ENCODE measurements at regions of chr14 and their contacts with region 1.

Region 1: DNA sequence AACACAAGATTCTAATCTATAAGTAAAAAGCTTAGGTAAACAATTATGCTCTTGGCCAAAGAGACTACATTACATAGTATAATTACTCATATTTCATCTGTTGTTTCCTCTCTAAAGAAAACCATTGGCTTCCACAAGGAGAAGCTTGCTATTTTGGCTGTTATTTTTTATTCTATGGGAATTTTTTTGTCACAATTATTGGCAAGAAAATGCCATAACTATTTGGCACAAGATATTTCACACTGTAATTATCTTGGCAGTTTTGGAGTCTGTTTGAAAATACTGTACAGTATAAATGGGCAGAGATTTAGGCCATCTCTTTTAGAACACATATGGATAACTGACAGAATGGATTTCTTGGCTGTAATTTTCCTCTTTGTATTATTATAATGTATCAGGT is 51.2 kb downstream of the KCNH5 start:
- DNase-seq: no peak
- H3K4me3 ChIP-seq: no peak overlapping the region
- H3K27ac ChIP-seq: no peak overlapping the region
- H3K4me1 ChIP-seq: no peaks in the 10 kb centered on the region
- H3K27me3 ChIP-seq: no peaks in the 10 kb centered on the region
- CTCF ChIP-seq: no peak
- POLR2A ChIP-seq: no peak

Region 2: DNA sequence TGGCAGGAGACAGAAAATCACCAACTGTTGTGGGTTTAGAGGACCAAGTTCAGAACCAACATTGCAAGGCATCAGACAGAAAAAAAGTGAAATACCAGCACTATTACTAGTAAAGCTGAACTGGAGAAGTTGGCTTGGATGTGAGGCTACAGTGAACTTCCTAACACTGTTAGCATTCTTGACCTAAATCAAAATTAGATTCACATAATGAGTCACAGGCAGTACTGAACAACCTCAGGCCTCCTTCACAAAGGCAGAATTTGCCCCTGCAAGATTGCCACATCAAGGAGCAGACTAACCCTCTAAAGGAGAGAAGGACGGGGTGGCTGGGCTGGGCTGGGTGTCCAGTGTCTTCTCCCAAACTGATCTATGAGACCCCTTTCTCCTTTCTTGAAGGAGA is 692.2 kb before region 1 on chr14:
- CTCF ChIA-PET with region 1: no interaction called
- POLR2A ChIA-PET with region 1: interaction called, 10 read pairs
- dilution Hi-C with region 1: no loop called
- intact Hi-C with region 1: no loop called
- DNase-seq: no peak
- H3K4me3 ChIP-seq: no peak overlapping the region
- H3K27ac ChIP-seq: no peak overlapping the region
- H3K4me1 ChIP-seq: no peaks in the 10 kb centered on the region
- H3K27me3 ChIP-seq: no peaks in the 10 kb centered on the region
- CTCF ChIP-seq: no peak
- POLR2A ChIP-seq: no peak

Region 3: DNA sequence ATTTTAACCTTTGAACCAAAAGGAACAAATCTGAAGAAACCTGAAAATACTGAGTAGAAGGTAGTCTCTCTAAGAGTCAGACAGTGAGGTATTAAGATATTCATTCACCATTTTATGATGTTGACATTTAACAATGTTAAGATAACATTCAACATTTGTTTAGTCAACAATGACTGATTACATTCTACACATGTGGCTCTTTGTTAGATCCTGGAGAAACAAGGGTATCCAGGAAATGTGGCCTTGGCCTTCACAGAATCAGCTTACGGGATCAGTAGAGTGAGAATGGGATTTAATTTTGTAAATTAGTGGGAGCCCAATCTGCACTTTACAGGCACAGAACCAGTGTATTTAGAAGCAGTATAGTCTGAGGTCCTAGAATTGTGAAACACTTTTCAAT is 304.4 kb before region 1 on chr14:
- CTCF ChIA-PET with region 1: no interaction called
- POLR2A ChIA-PET with region 1: no interaction called
- dilution Hi-C with region 1: no loop called
- intact Hi-C with region 1: no loop called
- DNase-seq: no peak
- H3K4me3 ChIP-seq: no peak overlapping the region
- H3K27ac ChIP-seq: no peak overlapping the region
- H3K4me1 ChIP-seq: no peaks in the 10 kb centered on the region
- H3K27me3 ChIP-seq: no peaks in the 10 kb centered on the region
- CTCF ChIP-seq: no peak
- POLR2A ChIP-seq: no peak

Region 4: DNA sequence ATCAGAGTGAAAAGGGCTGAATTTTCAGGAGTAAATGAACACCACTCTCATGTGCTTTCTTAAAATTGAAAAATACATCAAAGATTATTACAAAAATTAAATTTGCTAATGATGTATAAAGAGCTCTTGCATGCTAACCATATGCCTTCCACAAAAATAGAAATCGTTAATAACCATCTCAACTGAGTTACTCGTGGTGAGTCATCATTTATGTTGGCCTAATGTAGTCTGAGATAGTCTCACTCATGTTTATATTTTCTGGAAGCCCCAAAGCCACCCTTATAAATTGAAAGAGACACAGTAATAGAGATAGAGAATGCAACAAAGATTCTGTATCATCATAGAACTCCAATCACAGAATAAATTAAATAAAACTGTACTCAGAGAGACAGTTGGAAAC is 80.1 kb before region 1 on chr14:
- CTCF ChIA-PET with region 1: no interaction called
- POLR2A ChIA-PET with region 1: no interaction called
- dilution Hi-C with region 1: no loop called
- intact Hi-C with region 1: no loop called
- DNase-seq: no peak
- H3K4me3 ChIP-seq: no peak overlapping the region
- H3K27ac ChIP-seq: no peak overlapping the region
- H3K4me1 ChIP-seq: no peaks in the 10 kb centered on the region
- H3K27me3 ChIP-seq: no peaks in the 10 kb centered on the region
- CTCF ChIP-seq: no peak
- POLR2A ChIP-seq: no peak